Left colon (tissue), 2 donors: ENCODE measurements at regions of chr17 and their contacts with region 1.

Region 1: GRCh38 chr17:8189711-8190477 is at the start of gene BORCS6:
- DNase-seq: peak; percentile 96 to 99
- ATAC-seq: peak; percentile 68
- total RNA-seq, gene BORCS6: 12.2 to 13.3 TPM

Region 2: DNA sequence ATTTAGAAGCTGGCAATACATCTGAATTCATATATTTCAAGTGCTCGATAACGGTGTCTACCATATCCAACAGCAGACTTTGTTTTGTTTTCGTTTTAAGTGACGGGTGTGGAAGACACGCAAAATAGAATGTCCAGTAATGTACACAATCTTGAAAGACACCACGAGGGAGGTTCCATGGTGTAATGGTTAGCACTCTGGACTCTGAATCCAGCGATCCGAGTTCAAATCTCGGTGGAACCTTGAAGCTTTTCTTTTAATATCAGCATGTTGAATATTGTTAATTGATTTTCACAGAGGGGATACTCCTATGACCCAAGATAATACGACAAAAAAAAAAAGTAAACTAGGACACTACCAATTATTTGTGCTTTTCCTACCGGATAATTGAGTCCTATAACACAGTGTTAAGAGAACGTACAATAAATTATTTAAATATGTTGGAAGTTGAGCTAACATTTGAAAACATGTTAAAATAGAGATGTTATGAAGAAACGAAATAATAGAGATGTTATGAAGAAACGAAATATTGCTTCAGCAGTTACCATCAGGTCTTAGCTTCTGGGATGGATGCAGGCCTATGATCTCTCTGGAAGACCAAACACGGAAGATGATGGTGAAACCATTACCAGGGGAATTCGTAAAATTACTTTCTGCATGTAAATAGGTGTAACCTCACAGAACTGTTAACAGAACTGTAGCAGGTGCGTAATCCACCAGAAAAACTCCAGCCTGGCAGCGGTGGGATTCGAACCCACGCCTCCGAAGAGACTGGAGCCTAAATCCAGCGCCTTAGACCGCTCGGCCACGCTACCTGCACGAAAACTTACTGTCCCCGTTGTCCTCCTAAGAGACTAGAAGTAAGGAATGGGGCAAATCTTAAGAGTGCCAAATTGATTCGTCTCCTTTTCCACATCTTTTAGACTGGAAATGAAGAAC is 70.0 kb before region 1 on chr17:
- intact Hi-C with region 1: loop called in 1 of 2 experiments (anchors 10 kb)
- DNase-seq: peak; percentile 68 to 81
- ATAC-seq: peak; percentile 57

Region 3: GRCh38 chr17:8138672-8139371 is 51.1 kb before region 1 on chr17:
- intact Hi-C with region 1: no loop called
- DNase-seq: peak; percentile 91 to 96
- ATAC-seq: peak; percentile 96

Region 4: DNA sequence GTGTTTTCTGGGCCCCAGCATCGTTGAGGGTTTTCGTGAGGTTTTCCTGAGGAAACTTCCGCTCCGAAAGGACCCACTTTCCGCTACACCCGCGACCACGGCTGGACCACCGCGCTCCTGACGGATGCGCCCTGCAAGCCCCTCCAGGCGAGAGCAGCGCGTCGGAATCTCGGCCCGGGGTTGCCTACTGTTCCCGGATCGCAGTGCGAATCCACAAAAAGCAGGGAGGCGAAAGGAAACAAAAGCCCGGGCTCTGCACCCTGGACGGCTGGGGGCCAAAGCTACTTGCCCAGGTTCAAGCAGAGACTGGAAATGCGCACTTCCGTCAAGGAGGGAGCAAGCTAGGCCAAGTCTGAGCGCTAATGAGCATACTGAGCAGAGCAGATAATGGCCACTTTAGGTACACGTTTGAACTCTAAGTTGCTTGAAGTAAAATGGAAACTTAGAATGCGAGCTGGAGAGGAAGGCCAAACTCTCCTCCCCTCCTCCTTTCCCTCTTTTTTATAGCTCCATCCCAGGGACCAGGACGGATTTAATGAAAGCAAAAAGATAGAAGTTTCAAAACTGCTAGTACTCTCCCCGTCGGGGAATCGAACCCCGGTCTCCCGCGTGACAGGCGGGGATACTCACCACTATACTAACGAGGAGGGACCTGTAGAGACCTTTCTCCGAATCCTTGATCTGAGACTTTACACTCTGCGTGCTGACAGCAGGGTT is 31.9 kb after region 1 on chr17:
- intact Hi-C with region 1: loop called in 1 of 2 experiments (anchors 1 kb)
- DNase-seq: peak; percentile 78 to 87
- ATAC-seq: peak; percentile 52

Region 5: DNA sequence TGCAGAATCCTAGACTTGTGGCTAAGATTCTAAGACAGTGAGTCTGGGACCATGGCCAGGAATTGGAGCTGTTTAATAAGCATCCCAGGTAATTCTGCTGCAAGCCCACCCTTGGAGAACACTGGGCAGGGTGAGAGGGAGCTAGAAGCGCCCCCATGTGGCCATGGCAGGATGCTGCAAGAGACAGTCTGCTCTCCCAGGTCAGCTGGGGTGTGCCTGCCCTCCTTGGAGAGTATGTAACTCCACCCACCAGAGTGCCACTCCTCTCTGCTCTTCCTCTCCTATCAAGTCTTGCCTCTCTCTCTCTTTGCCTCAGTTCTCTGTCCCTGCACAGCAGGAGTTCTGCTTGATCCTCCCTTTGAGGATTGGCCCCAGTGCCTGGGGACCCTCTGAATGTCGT is 1700.2 kb after region 1 on chr17:
- intact Hi-C with region 1: no loop called
- DNase-seq: no peak
- ATAC-seq: no peak